GM13977 (cell line): ENCODE measurements at regions of chr1 and their contacts with region 1.

Region 1: DNA sequence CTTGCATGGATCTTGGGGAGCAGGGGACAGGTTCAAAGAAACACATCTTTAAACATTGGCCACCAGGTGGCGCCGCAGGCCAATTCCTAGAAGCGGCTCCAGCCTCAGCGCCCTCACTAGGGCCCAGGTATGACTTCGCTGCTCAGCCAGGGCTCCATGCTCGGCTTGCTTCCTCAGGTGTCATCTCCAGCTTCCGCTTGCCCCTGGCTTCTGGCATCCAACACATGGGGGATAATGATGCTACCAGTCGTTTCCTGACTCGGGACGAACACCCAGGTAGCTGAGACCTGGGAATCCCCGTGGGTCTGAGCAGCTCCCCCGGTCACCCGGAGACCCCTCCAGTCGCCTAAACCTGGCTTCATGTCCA is 8.5 kb upstream of the MEX3A start:
- DNase-seq: peak; percentile 80
- CTCF ChIP-seq: peak; percentile 86

Region 2: DNA sequence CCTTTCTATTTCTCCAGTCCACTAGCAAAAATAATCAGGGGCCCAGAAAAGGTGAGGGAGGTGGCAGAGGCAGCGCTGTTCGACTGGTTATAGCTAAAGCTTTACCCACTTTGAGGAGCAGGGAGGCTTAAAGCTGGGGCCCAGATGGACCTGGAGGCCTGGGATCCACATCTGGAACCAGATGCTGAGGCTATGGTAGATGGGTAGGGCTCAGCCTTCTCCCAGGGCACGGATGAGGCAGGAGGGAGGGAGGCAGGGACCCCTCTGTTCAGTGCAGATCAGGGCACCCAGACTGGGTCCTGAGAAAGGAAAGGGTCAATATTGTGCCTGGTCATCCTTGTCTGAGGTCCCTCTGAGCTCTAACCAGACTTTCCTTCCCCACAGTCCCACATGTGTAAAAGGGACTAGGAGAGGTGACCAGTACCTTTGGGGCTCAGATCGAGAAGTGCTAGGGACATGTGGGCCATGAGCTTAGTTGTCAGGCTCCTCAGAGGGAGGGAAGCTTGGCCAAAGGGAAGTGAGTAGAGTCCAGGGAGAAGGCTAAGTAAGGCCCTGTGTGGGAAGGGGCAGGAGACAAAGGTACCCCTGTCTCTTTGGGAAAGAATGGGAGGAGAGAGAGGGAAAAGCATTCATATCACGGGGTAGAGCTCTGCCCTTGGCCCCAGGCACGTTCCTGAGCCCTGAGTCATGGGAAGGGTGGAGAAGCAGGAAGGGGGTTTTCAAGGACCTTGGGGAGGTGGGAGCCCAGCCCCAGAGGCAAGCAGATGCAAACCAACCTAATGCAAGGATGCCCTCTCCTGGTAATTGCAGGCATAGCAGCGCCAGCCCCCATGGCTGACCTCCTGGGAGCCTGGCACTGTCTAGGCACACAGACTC is 39.1 kb after region 1 on chr1:
- in situ Hi-C with region 1: loop called (anchors 5 kb)
- DNase-seq: peak; percentile 76
- CTCF ChIP-seq: peak; percentile 98

Region 3: DNA sequence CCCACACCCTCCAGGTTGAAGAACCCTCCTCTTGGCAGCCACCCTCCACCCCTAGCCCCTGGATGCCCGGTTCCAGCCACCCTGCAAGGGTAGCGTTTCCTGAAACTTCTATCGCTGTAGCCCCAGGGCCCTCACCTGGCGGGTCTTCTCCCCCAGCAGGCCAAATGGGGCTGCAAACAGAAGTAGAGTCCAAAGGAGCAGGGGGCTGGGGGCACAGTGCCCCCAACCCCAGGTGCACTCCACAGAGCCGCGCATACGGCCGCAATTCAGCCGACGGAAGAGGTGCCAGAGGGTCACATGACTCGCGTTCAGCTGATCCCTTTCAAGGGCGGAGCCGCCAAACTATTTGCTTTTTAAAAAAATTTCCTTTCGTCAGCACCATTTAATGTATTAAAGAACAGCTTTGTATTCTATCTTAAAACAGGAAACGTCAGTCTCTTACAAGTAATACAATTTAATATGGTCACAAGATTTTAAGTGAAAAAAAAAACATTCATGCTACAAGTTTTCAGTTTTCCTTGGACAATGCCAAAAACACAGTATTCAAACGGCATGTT is 204.7 kb after region 1 on chr1 and contains the start of gene GLMP:
- in situ Hi-C with region 1: no loop called
- DNase-seq: peak; percentile 84
- CTCF ChIP-seq: no peak